Common myeloid progenitor, CD34-positive (primary cell): ENCODE measurements at regions of chr12 and their contacts with region 1.

Region 1: GRCh38 chr12:53481957-53482586 is 17.2 kb downstream of the MAP3K12 start:
- DNase-seq: peak in 2 of 3 donors; percentile 67 to 71
- H3K4me3 ChIP-seq: no peak overlapping the region
- H3K27ac ChIP-seq: no peak overlapping the region
- H3K4me1 ChIP-seq: peaks cover 0 to 2% (median 0%) of the 10 kb centered on the region in 4 experiments
- H3K27me3 ChIP-seq: no peaks in the 10 kb centered on the region

Region 2: GRCh38 chr12:53391729-53392128 is 90.3 kb before region 1 on chr12:
- CTCF ChIA-PET with region 1: no interaction called
- POLR2A ChIA-PET with region 1: no interaction called
- DNase-seq: no peak
- H3K4me3 ChIP-seq: no peak overlapping the region
- H3K27ac ChIP-seq: no peak overlapping the region
- H3K4me1 ChIP-seq: peaks cover 7 to 24% (median 16%) of the 10 kb centered on the region in 4 experiments
- H3K27me3 ChIP-seq: no peaks in the 10 kb centered on the region

Region 3: DNA sequence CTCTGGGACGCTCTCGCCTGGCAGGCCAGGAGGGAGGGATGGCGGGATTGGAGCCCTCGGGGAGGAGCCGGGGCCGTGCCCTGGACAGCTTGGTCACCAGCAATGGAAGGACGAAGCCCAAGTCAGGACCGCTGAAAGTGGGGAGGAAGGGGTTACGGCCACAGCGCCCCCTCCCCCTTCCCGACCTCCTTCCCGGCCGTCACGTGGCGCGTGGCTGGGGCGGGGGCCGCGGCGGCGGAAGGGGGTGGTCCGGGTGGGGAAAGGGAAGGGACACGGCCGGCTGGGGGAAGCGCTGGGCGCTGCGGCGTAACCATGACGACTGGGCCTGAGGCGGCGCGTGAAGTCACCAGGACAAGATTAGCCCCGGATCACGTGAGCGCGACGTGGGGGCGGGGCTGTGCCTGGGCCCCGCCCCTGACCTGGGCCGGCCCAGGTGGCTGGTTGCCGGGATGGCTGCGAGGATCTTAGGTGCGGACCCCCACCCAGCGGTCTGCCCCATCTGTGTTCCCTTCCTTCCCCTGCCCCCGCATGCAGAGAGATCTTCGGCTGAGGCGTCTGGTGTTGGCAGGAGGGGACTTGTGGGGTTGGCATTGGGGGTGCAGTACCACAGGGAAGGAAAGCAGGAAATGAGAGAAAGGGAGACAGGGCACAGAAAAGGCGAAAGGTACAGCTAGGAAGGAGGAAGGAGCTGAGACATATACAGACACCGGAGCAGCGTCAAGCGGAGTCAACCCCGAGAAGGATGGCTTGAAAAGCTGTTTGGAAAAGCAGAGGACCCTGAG is 10.9 kb after region 1 on chr12:
- CTCF ChIA-PET with region 1: interaction called, 26 read pairs
- POLR2A ChIA-PET with region 1: interaction called, 9 read pairs
- DNase-seq: peak; percentile 86 to 91 (median 89)
- H3K4me3 ChIP-seq: peak overlapping the region; percentile 17 to 84 (median 68)
- H3K27ac ChIP-seq: peak overlapping the region; percentile 58 to 80
- H3K4me1 ChIP-seq: peaks cover 8 to 48% (median 26%) of the 10 kb centered on the region in 4 experiments
- H3K27me3 ChIP-seq: no peaks in the 10 kb centered on the region

Region 4: GRCh38 chr12:53500776-53501614 is 18.9 kb after region 1 on chr12 and contains the start of gene TARBP2:
- CTCF ChIA-PET with region 1: interaction called, 130 read pairs
- POLR2A ChIA-PET with region 1: interaction called, 7 read pairs
- DNase-seq: peak; percentile 99 to 100 (median 100)
- H3K4me3 ChIP-seq: peak within 1 kb of the TSS; percentile 47 to 84 (median 73)
- H3K27ac ChIP-seq: peak within 1 kb of the TSS; percentile 86 to 95
- H3K4me1 ChIP-seq: peaks cover 6 to 55% (median 35%) of the 10 kb centered on the region in 4 experiments
- H3K27me3 ChIP-seq: no peaks in the 10 kb centered on the region

Region 5: GRCh38 chr12:53508534-53509199 is 26.6 kb after region 1 on chr12:
- CTCF ChIA-PET with region 1: interaction called, 130 read pairs
- POLR2A ChIA-PET with region 1: interaction called, 3 read pairs
- DNase-seq: peak; percentile 67 to 75 (median 72)
- H3K4me3 ChIP-seq: peak overlapping the region in 1 of 7 experiments; percentile 21
- H3K27ac ChIP-seq: no peak overlapping the region
- H3K4me1 ChIP-seq: peaks cover 0 to 11% (median 6%) of the 10 kb centered on the region in 4 experiments
- H3K27me3 ChIP-seq: no peaks in the 10 kb centered on the region